ENCODE measurements at regions of chr17 and their contacts with region 1.

Region 1: GRCh38 chr17:71460943-71461342 is 659.9 kb upstream of the SOX9 start:
- DNase-seq: peak in 1 of 2 experiments; percentile 12
- ATAC-seq: no peak
- H3K4me3 ChIP-seq: no peak overlapping the region
- H3K27ac ChIP-seq: no peak overlapping the region
- H3K4me1 ChIP-seq: no peaks in the 10 kb centered on the region
- CTCF ChIP-seq: peak; percentile 43
- EP300 ChIP-seq: no peak
- POLR2A ChIP-seq: no peak
- RAD21 ChIP-seq: peak; percentile 43 to 55; a peak in 4 of 5 replicates

Region 2: GRCh38 chr17:71237903-71238538 is 222.9 kb before region 1 on chr17:
- CTCF ChIA-PET with region 1: interaction called, 10 read pairs
- POLR2A ChIA-PET with region 1: no interaction called
- DNase-seq: peak; percentile 6 to 37
- ATAC-seq: peak; percentile 62 to 73; a peak in 4 of 6 replicates
- H3K4me3 ChIP-seq: no peak overlapping the region
- H3K27ac ChIP-seq: no peak overlapping the region
- H3K4me1 ChIP-seq: no peaks in the 10 kb centered on the region
- CTCF ChIP-seq: peak; percentile 43
- EP300 ChIP-seq: no peak
- POLR2A ChIP-seq: no peak
- RAD21 ChIP-seq: peak; percentile 58 to 67

Region 3: DNA sequence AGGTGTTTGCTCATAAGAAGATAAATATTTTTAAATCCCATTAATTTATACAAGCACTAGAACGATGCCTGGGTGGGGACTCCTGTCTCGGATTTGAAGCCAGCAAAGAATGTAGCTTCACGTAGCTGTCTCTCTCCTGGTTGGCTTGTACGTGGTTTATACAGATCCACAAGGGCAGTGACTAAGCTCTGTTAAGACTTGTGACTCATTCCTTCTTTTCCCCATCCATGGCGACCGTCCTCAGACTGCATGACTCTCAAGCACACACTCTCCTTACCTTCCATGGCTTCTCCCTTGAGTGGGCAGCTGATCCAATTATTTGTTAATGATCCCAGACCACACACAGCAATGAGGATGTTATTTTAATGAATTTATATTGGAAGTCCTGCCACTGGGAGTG is 19.8 kb before region 1 on chr17:
- CTCF ChIA-PET with region 1: interaction called, 12 read pairs
- POLR2A ChIA-PET with region 1: no interaction called
- DNase-seq: peak; percentile 45 to 90
- ATAC-seq: peak; percentile 94 to 96
- H3K4me3 ChIP-seq: peak overlapping the region; percentile 15; the same call in 1 of the 3 replicates
- H3K27ac ChIP-seq: peak overlapping the region; percentile 58 to 80
- H3K4me1 ChIP-seq: peaks cover 37% of the 10 kb centered on the region
- CTCF ChIP-seq: no peak
- EP300 ChIP-seq: no peak
- POLR2A ChIP-seq: no peak
- RAD21 ChIP-seq: 0 out of 5 replicates have a peak, but pooled peaks of 1 of the 2 experiments have one; percentile 16

Region 4: GRCh38 chr17:71472809-71473789 is 12.2 kb after region 1 on chr17:
- CTCF ChIA-PET with region 1: interaction called, 46 read pairs
- POLR2A ChIA-PET with region 1: no interaction called
- DNase-seq: peak; percentile 55 to 68
- ATAC-seq: peak; percentile 93 to 94
- H3K4me3 ChIP-seq: no peak overlapping the region
- H3K27ac ChIP-seq: 0 out of 6 replicates have a peak overlapping the region, but pooled peaks of 1 of the 2 experiments have one; percentile 10
- H3K4me1 ChIP-seq: peaks cover 3% of the 10 kb centered on the region; the same call in 1 of the 3 replicates
- CTCF ChIP-seq: peak; percentile 87
- EP300 ChIP-seq: no peak
- POLR2A ChIP-seq: no peak
- RAD21 ChIP-seq: peak; percentile 76 to 84

Measured in A549 (cell line).